GM10248 (cell line): ENCODE measurements at regions of chr15 and their contacts with region 1.

Region 1: GRCh38 chr15:77186594-77187011 is 115.7 kb upstream of the TSPAN3 start:
- DNase-seq: peak; percentile 25
- CTCF ChIP-seq: peak; percentile 69

Region 2: GRCh38 chr15:77475898-77476297 is 289.3 kb after region 1 on chr15:
- CTCF ChIA-PET with region 1: interaction called, 11 read pairs
- POLR2A ChIA-PET with region 1: no interaction called
- DNase-seq: no peak
- CTCF ChIP-seq: no peak

Region 3: DNA sequence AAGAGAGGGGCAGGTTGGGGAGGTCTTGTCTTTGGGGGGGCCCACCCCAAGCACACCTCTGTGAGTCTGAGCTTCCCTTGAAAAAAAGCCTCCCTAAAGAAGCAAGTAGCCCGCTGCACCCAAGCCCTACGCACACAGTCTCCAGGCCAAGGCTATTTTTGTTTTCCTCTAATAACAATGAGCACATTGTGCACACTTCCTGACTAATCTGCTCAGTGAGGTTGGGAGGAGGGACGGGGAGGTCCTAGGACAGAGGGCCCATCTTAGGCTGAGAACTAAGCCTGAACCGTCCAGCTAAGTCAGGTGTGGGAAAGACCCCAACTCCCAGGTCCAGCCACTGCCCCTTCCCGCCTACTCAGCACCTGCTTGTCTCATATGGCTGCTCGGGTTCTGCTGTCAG is 321.3 kb after region 1 on chr15:
- CTCF ChIA-PET with region 1: interaction called, 10 read pairs
- POLR2A ChIA-PET with region 1: no interaction called
- DNase-seq: no peak
- CTCF ChIP-seq: no peak